PC-3 (cell line): ENCODE measurements at regions of chrX and their contacts with region 1.

Region 1: DNA sequence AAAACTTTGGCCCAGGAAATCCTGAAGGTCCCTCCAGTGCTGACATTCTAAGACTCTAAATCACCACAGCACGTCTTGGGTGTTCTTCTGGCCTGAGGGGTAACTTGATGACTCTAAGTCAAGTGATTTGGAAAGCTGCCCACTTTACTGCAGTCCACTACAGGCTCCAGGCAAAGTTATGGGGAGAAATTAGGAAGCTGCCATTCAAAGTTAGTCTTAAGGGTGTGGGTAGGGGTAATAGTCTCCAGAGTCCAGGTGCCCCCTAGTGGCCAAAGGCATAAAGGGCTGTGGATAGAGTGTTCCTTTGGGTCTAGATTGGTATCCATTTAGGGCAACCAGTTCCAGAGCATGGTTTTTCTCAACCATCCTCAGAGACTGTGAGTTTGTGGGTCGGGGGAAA is 38.7 kb upstream of the SLC16A2 start:
- DNase-seq: peak; percentile 83
- ATAC-seq: peak; percentile 85
- H3K4me3 ChIP-seq: no peak overlapping the region
- H3K27ac ChIP-seq: no peak overlapping the region
- H3K4me1 ChIP-seq: peaks cover 8% of the 10 kb centered on the region
- H3K27me3 ChIP-seq: no peaks in the 10 kb centered on the region
- CTCF ChIP-seq: peak; percentile 83

Region 2: GRCh38 chrX:74216421-74216820 is 166.2 kb before region 1 on chrX:
- CTCF ChIA-PET with region 1: no interaction called
- POLR2A ChIA-PET with region 1: no interaction called
- intact Hi-C with region 1: no loop called
- DNase-seq: no peak
- ATAC-seq: no peak
- H3K4me3 ChIP-seq: no peak overlapping the region
- H3K27ac ChIP-seq: no peak overlapping the region
- H3K4me1 ChIP-seq: no peaks in the 10 kb centered on the region
- H3K27me3 ChIP-seq: no peaks in the 10 kb centered on the region
- CTCF ChIP-seq: no peak

Region 3: GRCh38 chrX:74291964-74292807 is 90.4 kb before region 1 on chrX:
- CTCF ChIA-PET with region 1: no interaction called
- POLR2A ChIA-PET with region 1: no interaction called
- intact Hi-C with region 1: loop called (anchors 5 kb)
- DNase-seq: peak; percentile 85
- ATAC-seq: peak; percentile 92
- H3K4me3 ChIP-seq: peak overlapping the region; percentile 98
- H3K27ac ChIP-seq: peak overlapping the region; percentile 98
- H3K4me1 ChIP-seq: no peaks in the 10 kb centered on the region
- H3K27me3 ChIP-seq: no peaks in the 10 kb centered on the region
- CTCF ChIP-seq: peak; percentile 42; the same call in 1 of the 2 replicates

Region 4: GRCh38 chrX:74421036-74421739 is 38.6 kb after region 1 on chrX and contains the start of gene SLC16A2:
- CTCF ChIA-PET with region 1: no interaction called
- POLR2A ChIA-PET with region 1: no interaction called
- intact Hi-C with region 1: loop called (anchors 2 kb)
- DNase-seq: peak; percentile 72
- ATAC-seq: peak; percentile 54
- H3K4me3 ChIP-seq: peak within 1 kb of the TSS; percentile 79
- H3K27ac ChIP-seq: peak within 1 kb of the TSS; percentile 74
- H3K4me1 ChIP-seq: peaks cover 17% of the 10 kb centered on the region
- H3K27me3 ChIP-seq: no peaks in the 10 kb centered on the region
- CTCF ChIP-seq: no peak
- total RNA-seq, gene SLC16A2: 8.5 and 11.1 TPM in 2 replicates

Region 5: DNA sequence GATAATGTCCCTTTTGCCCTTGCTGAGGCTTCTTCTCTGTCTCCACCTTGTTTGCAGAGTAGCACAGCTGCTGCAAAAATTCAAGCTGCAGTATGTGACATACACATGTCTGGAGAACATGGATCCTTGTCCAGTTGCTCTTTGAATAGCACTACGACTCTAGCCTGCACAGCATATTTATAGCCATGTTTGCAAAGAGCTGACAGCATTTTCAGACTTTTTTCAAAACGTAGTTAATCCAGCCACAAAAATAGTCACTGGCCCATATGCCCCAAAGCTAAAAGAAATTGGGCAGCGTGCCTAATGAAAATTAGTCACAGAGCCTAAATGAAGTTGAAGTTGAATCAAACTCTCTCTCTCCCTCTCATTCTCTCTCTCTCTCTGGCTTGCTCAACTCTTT is 56.2 kb after region 1 on chrX:
- CTCF ChIA-PET with region 1: no interaction called
- POLR2A ChIA-PET with region 1: no interaction called
- intact Hi-C with region 1: no loop called
- DNase-seq: no peak
- ATAC-seq: no peak
- H3K4me3 ChIP-seq: no peak overlapping the region
- H3K27ac ChIP-seq: no peak overlapping the region
- H3K4me1 ChIP-seq: 0 out of 2 replicates have a peak, but pooled peaks cover 3% of the 10 kb centered on the region
- H3K27me3 ChIP-seq: no peaks in the 10 kb centered on the region
- CTCF ChIP-seq: no peak

Region 6: GRCh38 chrX:74458735-74459134 is 76.1 kb after region 1 on chrX:
- CTCF ChIA-PET with region 1: no interaction called
- POLR2A ChIA-PET with region 1: no interaction called
- intact Hi-C with region 1: loop called (anchors 1 kb)
- DNase-seq: peak; percentile 93
- ATAC-seq: peak; percentile 94
- H3K4me3 ChIP-seq: no peak overlapping the region
- H3K27ac ChIP-seq: no peak overlapping the region
- H3K4me1 ChIP-seq: peaks cover 10% of the 10 kb centered on the region; the same call in 1 of the 2 replicates
- H3K27me3 ChIP-seq: no peaks in the 10 kb centered on the region
- CTCF ChIP-seq: peak; percentile 61

Region 7: DNA sequence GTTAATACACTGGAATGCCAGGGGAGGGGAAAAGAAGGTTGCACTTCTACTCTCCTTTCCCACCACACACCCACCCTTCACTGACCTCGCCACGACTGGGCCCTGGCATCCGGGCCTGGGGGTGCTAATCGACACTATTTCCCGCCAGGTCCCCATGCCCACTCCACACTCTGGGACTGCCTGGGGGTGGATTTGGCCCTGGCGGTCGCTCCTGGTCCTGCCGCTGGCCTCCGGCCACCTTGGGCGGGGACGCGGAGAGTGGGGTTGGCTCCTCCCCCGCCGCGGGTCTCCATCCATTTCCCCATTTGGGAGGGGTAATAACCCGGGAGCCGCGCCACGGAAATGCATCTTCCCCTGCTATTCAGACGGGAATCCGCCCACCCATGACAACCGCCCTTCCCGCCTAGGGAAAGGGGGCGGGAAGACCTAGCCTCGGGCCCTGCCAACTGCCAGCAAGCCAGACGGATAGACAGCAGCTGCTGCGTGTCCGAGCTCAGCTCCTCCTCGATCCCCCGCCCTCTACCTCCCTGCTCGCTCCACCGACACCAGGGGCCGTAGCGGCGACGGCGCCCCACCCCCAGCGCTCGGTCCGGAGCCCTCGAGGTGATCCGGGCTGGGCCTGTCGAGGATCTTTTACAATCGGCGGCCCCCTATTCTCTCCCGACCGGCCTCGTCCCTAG is 153.7 kb after region 1 on chrX:
- CTCF ChIA-PET with region 1: interaction called, 3 read pairs
- POLR2A ChIA-PET with region 1: no interaction called
- intact Hi-C with region 1: loop called (anchors 1 kb)
- DNase-seq: peak; percentile 78
- ATAC-seq: peak; percentile 81
- H3K4me3 ChIP-seq: peak overlapping the region; percentile 71
- H3K27ac ChIP-seq: peak overlapping the region; percentile 23; the same call in 1 of the 2 replicates
- H3K4me1 ChIP-seq: peaks cover 14% of the 10 kb centered on the region
- H3K27me3 ChIP-seq: no peaks in the 10 kb centered on the region
- CTCF ChIP-seq: no peak

Region 8: DNA sequence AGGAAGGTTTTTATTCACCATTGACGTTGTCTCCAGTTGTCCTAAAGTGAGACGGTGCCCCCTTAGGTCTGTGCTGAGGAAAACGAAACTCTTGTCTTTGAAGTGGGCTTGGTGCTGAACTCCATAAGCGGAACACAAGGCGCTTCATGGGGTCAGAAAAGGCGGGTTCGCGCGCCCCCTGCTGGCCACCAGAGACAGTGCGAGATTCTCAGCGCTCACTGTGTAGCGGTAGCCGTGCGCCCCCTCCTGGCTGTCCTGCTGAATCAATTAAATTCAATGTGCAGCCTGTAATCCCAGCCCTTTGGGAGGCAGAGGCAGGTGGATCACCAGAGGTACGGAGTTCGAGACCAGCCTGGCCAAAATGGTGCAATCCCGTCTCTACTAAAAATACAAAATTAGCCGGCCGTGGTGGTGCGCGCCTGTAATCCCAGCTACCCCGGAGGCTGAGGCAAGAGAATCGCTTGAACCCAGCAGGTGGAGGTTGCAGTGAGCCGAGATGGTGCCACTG is 167.7 kb after region 1 on chrX:
- CTCF ChIA-PET with region 1: no interaction called
- POLR2A ChIA-PET with region 1: no interaction called
- intact Hi-C with region 1: loop called (anchors 1 kb)
- DNase-seq: peak; percentile 79
- ATAC-seq: peak; percentile 86
- H3K4me3 ChIP-seq: peak overlapping the region; percentile 52; the same call in 1 of the 2 replicates
- H3K27ac ChIP-seq: no peak overlapping the region
- H3K4me1 ChIP-seq: no peaks in the 10 kb centered on the region
- H3K27me3 ChIP-seq: no peaks in the 10 kb centered on the region
- CTCF ChIP-seq: peak; percentile 97